GM13976 (cell line): ENCODE measurements at regions of chr12 and their contacts with region 1.

Region 1: DNA sequence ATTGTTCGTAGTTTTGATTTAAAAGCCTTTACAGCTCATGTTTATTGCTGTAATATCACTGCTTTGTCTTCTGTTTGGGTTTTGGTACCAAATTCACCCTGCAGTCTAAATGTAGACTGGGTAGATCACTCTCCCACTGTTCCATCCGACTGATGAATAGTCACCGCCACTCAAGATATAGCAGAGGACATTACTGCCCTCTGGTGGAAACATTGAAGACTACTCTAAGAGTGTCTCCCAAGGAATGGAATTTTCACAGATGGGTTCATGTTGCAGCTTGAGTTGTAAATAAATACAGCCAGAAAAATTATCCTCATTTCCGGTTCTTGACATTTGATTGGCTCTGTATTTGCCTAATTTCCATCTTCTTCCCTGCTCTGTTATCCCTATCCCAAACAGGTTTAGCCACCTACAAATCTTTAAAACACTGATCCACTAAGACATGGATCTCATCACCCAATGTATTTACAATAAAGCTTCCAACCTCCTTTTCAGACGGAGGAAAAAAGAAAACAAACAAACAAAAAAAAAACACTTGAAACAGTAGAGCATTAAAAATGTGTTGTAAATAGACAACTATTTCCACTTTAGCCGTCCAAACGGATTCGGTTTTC is 198.3 kb upstream of the CPNE8 start:
- DNase-seq: peak; percentile 70
- CTCF ChIP-seq: peak; percentile 71

Region 2: GRCh38 chr12:38342444-38342843 is 761.2 kb before region 1 on chr12:
- in situ Hi-C with region 1: loop called (anchors 10 kb)
- DNase-seq: no peak
- CTCF ChIP-seq: no peak

Region 3: GRCh38 chr12:39831587-39832308 is 728.1 kb after region 1 on chr12:
- in situ Hi-C with region 1: no loop called
- DNase-seq: no peak
- CTCF ChIP-seq: no peak